A549 (cell line): ENCODE measurements at regions of chr3 and their contacts with region 1.

Region 1: DNA sequence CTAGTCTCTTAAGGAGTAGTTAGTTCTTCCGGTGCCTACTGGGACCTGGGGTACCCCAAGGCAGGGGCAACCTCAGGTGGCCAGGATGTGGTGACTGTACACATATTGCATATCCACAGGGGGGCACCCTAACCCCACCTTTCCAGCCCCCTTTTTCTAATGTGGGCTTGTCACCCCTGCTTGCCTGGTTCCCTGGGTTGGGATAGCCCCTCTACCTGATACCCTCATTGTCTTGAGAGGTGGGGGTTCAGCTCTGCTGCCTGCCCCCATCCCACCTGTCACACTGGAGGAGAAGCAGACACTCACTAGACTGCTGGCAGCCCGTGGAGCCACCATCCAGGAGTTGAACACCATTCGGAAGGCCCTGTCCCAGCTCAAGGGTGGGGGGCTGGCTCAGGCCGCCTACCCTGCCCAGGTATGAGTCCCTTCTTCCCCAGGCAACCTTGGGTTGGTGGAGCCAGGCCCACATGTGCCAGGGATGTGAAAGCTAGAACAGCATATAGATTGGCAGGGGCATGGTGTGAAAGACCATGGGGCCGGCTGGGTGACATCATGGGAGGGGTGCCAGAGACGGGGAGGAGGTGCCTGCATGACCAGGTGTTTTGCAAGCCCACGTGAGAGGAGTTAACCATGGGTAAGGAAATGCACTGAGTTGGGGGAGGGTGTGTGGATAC is 4.0 kb downstream of the GLYCTK start:
- DNase-seq: no peak
- ATAC-seq: peak in 1 of 2 experiments; percentile 39; a peak in 3 of 6 replicates
- H3K4me3 ChIP-seq: no peak overlapping the region
- H3K27ac ChIP-seq: no peak overlapping the region
- H3K4me1 ChIP-seq: peaks cover 20% of the 10 kb centered on the region
- CTCF ChIP-seq: peak; percentile 63
- EP300 ChIP-seq: no peak
- POLR2A ChIP-seq: no peak
- RAD21 ChIP-seq: peak; percentile 79 to 82

Region 2: DNA sequence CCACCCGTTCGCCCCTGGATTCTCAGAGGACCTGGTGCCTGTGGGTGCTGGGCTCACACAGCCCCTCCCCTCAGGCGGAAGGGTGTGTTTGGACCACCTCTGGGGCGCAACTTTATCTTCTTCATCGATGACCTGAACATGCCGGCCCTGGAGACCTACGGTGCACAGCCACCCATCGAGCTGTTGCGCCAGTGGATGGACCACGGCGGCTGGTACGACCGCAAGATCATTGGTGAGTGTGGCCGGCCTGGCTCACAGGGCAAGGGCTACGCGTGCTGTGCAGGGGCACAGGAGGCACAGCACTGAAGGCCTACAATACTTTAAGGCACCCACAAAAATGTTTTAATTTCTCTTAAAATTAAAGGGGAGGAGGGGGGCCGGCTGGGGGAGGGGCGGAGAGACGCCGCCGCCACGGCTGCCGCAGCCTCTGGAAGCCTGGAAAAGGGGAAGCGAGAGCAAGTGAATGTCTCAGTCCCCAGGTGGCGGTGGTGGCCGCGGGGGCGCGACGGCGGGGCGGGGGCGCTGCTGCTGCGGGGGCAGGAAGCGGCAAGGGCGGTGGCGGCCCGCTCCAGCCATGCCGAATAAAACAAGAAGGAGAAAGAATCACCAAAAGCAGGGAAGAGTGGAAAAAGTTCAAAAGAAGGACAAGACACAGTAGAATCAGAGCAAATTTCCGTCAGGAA is 81.3 kb after region 1 on chr3:
- CTCF ChIA-PET with region 1: no interaction called
- POLR2A ChIA-PET with region 1: no interaction called
- DNase-seq: no peak
- ATAC-seq: no peak
- H3K4me3 ChIP-seq: no peak overlapping the region
- H3K27ac ChIP-seq: no peak overlapping the region
- H3K4me1 ChIP-seq: no peaks in the 10 kb centered on the region
- CTCF ChIP-seq: no peak
- EP300 ChIP-seq: no peak
- POLR2A ChIP-seq: no peak
- RAD21 ChIP-seq: no peak

Region 3: DNA sequence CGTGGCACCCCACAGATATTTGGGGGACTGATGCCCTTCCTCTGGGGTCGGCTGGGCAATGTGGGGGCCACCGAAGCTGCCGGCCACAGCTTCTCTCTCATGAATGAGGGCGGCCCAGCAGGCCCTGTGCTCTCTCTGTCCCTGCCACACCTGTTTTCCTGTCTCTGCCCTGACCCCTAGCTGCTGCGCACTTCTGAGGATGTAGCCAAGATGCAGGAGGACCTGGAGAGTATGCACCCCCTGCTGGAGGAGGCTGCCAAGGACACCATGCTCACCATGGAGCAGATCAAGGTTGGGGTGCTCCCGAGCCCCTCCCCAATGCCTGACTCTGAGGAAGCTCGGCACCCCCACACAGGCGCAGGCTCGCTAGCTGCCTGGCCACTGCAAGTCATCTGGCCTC is 93.5 kb after region 1 on chr3:
- CTCF ChIA-PET with region 1: interaction called, 10 read pairs
- POLR2A ChIA-PET with region 1: interaction called, 3 read pairs
- DNase-seq: peak; percentile 64
- ATAC-seq: peak; percentile 66 to 92
- H3K4me3 ChIP-seq: no peak overlapping the region
- H3K27ac ChIP-seq: no peak overlapping the region
- H3K4me1 ChIP-seq: no peaks in the 10 kb centered on the region
- CTCF ChIP-seq: peak; percentile 35; the same call in 2 of the 3 replicates
- EP300 ChIP-seq: no peak
- POLR2A ChIP-seq: no peak
- RAD21 ChIP-seq: peak in 1 of 2 experiments; percentile 50; a peak in 2 of 5 replicates